Prostate gland (tissue), 2 donors: ENCODE measurements at regions of chr4 and their contacts with region 1.

Region 1: GRCh38 chr4:3201718-3202702 is 46.9 kb upstream of the MSANTD1 start:
- DNase-seq: no peak
- H3K4me3 ChIP-seq: no peak overlapping the region
- H3K27ac ChIP-seq: no peak overlapping the region
- H3K4me1 ChIP-seq: no peaks in the 10 kb centered on the region
- H3K27me3 ChIP-seq: no peaks in the 10 kb centered on the region
- CTCF ChIP-seq: no peak
- POLR2A ChIP-seq: no peak

Region 2: GRCh38 chr4:3106339-3107186 is 95.4 kb before region 1 on chr4:
- intact Hi-C with region 1: no loop called
- DNase-seq: peak; percentile 81
- H3K4me3 ChIP-seq: no peak overlapping the region
- H3K27ac ChIP-seq: no peak overlapping the region
- H3K4me1 ChIP-seq: no peaks in the 10 kb centered on the region
- H3K27me3 ChIP-seq: no peaks in the 10 kb centered on the region
- CTCF ChIP-seq: peak; percentile 67 to 96 (median 92)
- POLR2A ChIP-seq: no peak

Region 3: DNA sequence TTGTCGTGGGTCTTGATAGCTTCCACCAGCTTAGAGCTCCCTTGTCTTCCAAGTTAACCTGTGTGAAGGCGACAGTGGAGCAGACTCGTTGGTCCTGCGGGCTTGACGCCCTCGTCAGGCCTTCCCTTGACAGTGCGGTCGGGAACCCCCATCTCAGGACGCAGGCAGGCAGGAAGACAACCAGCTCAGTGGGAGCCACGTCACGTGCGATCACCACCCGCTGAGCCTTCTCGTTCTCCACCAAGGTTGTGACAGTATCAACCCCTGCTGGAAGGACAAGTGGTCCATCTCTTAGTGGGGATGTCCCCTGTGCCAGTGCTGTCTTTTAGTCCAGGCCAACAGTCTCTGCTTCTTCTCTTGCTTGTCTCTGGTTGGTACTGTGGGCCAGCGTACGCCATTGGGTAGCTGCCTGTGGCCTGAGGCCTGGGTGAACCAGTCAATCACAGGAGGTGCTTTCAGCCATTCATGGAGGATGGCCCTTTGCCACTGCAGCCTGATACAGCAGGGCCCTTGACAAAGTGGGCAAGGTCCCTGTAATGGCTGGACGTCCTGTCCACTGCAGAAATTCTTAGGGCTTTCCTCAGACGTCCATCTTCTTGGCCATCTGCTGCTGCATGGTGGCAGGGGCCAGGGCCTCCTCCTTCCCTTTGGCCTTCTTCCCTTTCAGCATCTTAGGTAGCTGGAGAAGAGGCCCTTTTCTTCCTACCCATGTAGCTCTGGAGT is 122.2 kb after region 1 on chr4:
- intact Hi-C with region 1: no loop called
- DNase-seq: no peak
- H3K4me3 ChIP-seq: no peak overlapping the region
- H3K27ac ChIP-seq: no peak overlapping the region
- H3K4me1 ChIP-seq: no peaks in the 10 kb centered on the region
- H3K27me3 ChIP-seq: no peaks in the 10 kb centered on the region
- CTCF ChIP-seq: no peak
- POLR2A ChIP-seq: no peak

Region 4: DNA sequence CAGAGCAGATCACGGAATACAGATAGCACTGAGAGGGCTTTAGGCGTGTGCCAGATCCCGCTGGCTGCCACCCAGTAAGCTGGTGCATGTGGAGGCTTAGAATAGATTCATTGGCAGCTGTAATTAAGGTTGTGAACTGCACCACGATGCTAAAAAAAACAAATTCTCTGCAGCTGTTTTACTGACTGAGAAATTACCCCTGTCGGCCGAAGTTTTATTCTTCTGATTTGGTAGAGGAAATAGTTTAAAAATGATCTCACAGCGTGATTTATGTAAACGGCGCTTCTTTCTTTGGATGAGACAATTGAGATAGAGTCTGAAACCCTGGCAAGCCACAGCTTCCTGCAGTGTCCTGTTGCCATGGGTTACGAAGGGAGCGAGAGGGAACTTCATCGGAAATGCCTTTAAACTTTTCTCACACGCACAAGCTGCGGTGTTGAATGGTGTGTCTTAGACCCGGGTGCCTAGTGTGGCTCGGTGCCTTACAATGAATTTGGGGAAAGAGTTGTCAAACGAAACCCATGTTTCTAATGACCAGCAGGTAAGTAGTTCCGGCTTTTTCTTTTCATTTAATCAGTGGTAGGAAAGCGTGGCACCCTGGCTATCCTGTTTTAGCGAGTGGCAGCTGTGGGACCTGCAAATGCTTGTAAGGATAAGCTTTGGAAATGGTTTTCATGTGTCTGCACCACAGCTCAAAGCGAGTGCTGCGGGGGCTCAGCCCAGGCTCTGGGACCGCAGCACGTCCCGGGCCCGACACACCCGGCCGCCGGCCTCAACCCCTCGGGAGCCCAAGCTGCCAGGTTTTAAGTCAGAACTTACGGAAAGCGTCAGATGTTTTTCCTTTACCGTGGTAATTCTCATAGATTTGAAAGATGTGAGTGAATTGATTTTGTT is 168.0 kb after region 1 on chr4:
- intact Hi-C with region 1: no loop called
- DNase-seq: no peak
- H3K4me3 ChIP-seq: no peak overlapping the region
- H3K27ac ChIP-seq: no peak overlapping the region
- H3K4me1 ChIP-seq: peaks cover 7% of the 10 kb centered on the region
- H3K27me3 ChIP-seq: no peaks in the 10 kb centered on the region
- CTCF ChIP-seq: peak in 1 of 4 experiments; percentile 16
- POLR2A ChIP-seq: no peak

Region 5: GRCh38 chr4:3449574-3450534 is 247.8 kb after region 1 on chr4:
- intact Hi-C with region 1: loop called (anchors 5 kb)
- DNase-seq: no peak
- H3K4me3 ChIP-seq: no peak overlapping the region
- H3K27ac ChIP-seq: no peak overlapping the region
- H3K4me1 ChIP-seq: no peaks in the 10 kb centered on the region
- H3K27me3 ChIP-seq: no peaks in the 10 kb centered on the region
- CTCF ChIP-seq: no peak
- POLR2A ChIP-seq: no peak